CD8-positive, alpha-beta memory T cell (primary cell): ENCODE measurements at regions of chr4 and their contacts with region 1.

Region 1: GRCh38 chr4:177441803-177442622 is at the start of gene AGA:
- DNase-seq: peak; percentile 94 to 97 (median 95)
- H3K4me3 ChIP-seq: peak within 1 kb of the TSS; percentile 92
- H3K4me3 Mint-ChIP-seq: peak within 1 kb of the TSS; percentile 90 to 98 (median 95)
- H3K27ac ChIP-seq: peak within 1 kb of the TSS; percentile 88
- H3K27ac Mint-ChIP-seq: peak within 1 kb of the TSS; percentile 90 to 99 (median 96)
- H3K4me1 ChIP-seq: peaks cover 15% of the 10 kb centered on the region
- H3K4me1 Mint-ChIP-seq: peaks cover 30 to 40% (median 33%) of the 10 kb centered on the region in 3 donors
- H3K27me3 ChIP-seq: no peaks in the 10 kb centered on the region
- H3K27me3 Mint-ChIP-seq: no peaks in the 10 kb centered on the region
- total RNA-seq, gene AGA: 15.1 to 16.8 TPM

Region 2: DNA sequence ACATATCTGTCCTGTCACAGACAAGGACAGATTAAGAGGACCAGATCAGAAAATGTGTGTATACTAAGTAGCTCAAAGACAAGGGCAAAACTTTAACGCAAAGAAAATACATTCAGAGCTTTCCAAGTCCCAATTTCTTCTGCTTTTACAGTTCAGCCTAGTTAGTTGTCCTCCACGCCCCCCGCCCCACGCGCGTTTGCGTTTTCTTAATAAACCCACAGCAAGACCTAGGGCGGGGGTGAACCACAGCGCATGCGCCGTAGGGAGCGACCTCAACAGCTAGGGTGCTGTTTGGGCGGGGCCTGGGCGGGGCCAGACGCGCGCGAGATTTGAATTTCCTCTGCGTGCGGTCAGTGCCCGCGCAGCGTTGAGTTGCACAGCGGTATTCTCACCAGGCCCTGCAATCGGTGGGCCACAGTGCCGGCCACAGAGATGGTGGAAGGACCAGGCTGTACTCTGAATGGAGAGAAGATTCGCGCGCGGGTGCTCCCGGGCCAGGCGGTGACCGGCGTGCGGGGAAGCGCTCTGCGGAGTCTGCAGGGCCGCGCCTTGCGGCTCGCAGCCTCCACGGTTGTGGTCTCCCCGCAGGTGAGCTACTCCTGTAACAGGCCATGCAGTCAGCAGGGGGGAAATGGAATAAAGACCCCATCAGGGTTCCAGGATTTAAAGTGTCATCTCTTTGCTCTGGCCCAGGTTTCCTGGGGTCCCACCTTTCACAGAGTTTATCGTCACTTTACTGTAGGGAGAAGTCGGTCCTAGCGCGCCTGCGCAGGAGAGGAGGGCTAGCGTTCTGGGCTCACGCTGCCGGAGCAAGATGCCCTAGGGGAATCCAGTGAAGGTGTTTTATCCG is 132.3 kb before region 1 on chr4 and contains the start of gene NEIL3:
- CTCF ChIA-PET with region 1: interaction called, 3 read pairs
- POLR2A ChIA-PET with region 1: interaction called, 14 read pairs
- DNase-seq: peak; percentile 87 to 97 (median 94)
- H3K4me3 ChIP-seq: peak within 1 kb of the TSS; percentile 67
- H3K4me3 Mint-ChIP-seq: peak within 1 kb of the TSS; percentile 80 to 96 (median 94)
- H3K27ac ChIP-seq: peak within 1 kb of the TSS; percentile 72
- H3K27ac Mint-ChIP-seq: peak within 1 kb of the TSS; percentile 60 to 92 (median 90)
- H3K4me1 ChIP-seq: peaks cover 22% of the 10 kb centered on the region
- H3K4me1 Mint-ChIP-seq: peaks cover 15 to 63% (median 48%) of the 10 kb centered on the region in 3 donors
- H3K27me3 ChIP-seq: no peaks in the 10 kb centered on the region
- H3K27me3 Mint-ChIP-seq: no peaks in the 10 kb centered on the region
- total RNA-seq, gene NEIL3: 9.9 to 10.3 TPM

Region 3: GRCh38 chr4:177393236-177393635 is 48.8 kb before region 1 on chr4:
- CTCF ChIA-PET with region 1: no interaction called
- POLR2A ChIA-PET with region 1: no interaction called
- DNase-seq: peak in 2 of 5 donors; percentile 27 to 64
- H3K4me3 ChIP-seq: no peak overlapping the region
- H3K4me3 Mint-ChIP-seq: peak overlapping the region in 5 of 7 donors; percentile 27 to 72 (median 54)
- H3K27ac ChIP-seq: no peak overlapping the region
- H3K27ac Mint-ChIP-seq: peak overlapping the region in 5 of 8 donors; percentile 55 to 91 (median 79)
- H3K4me1 ChIP-seq: peaks cover 15% of the 10 kb centered on the region
- H3K4me1 Mint-ChIP-seq: peaks cover 21 to 26% (median 24%) of the 10 kb centered on the region in 3 donors
- H3K27me3 ChIP-seq: no peaks in the 10 kb centered on the region
- H3K27me3 Mint-ChIP-seq: peaks cover 0 to 5% of the 10 kb centered on the region in 2 donors

Region 4: GRCh38 chr4:177427192-177427591 is 14.8 kb before region 1 on chr4:
- CTCF ChIA-PET with region 1: interaction called, 12 read pairs
- POLR2A ChIA-PET with region 1: no interaction called
- DNase-seq: no peak
- H3K4me3 ChIP-seq: no peak overlapping the region
- H3K4me3 Mint-ChIP-seq: no peak overlapping the region
- H3K27ac ChIP-seq: no peak overlapping the region
- H3K27ac Mint-ChIP-seq: no peak overlapping the region
- H3K4me1 ChIP-seq: no peaks in the 10 kb centered on the region
- H3K4me1 Mint-ChIP-seq: no peaks in the 10 kb centered on the region
- H3K27me3 ChIP-seq: no peaks in the 10 kb centered on the region
- H3K27me3 Mint-ChIP-seq: peaks cover 3 to 6% of the 10 kb centered on the region in 2 donors